ENCODE measurements at regions of chr3 and their contacts with region 1.

Region 1: GRCh38 chr3:188262913-188263683 is 109.1 kb downstream of the LPP start:
- DNase-seq: peak; percentile 49 to 54
- ATAC-seq: peak; percentile 8 to 17
- H3K4me3 ChIP-seq: no peak overlapping the region
- H3K27ac ChIP-seq: peak overlapping the region; percentile 94 to 99 (median 96)
- H3K4me1 ChIP-seq: peaks cover 83 to 92% of the 10 kb centered on the region in 2 donors
- H3K27me3 ChIP-seq: no peaks in the 10 kb centered on the region
- CTCF ChIP-seq: no peak
- POLR2A ChIP-seq: peak in 1 of 2 donors; percentile 68

Region 2: DNA sequence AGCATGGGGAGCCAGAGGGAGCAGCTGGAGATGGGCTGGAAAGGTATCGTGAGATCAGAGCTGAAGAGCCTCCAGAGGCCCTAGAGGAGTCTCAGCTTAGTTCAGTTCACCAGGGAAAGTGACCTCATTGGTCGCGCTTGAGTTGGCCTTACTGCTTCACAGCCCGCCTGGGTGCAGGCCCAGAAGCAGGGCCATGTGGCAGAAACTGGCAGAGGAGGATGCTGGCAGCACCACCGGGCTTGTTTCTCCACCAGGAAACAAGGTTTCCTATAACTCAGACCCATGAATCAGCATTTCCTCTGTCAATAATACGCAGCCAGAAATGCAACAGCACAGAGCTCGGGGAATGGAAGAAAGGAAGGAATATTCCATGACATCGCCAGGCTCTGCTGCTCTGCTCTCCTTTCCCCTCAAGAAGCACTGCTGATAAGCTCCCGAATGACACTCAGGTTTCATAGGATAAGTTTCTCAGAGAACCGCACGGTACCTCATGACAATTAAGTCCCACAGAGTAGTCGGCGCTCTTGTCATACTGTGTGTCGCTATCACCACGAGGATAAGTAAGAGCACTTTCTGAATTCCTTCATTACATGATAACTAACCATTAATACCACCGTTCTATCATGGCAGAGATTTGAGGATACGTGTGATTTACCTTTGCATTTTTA is 256.2 kb before region 1 on chr3:
- in situ Hi-C with region 1: no loop called
- intact Hi-C with region 1: loop called (anchors 5 kb)
- DNase-seq: peak; percentile 87 to 97
- ATAC-seq: peak; percentile 86 to 90
- H3K4me3 ChIP-seq: peak overlapping the region; percentile 12 to 42 (median 26)
- H3K27ac ChIP-seq: peak overlapping the region; percentile 88 to 97 (median 90)
- H3K4me1 ChIP-seq: peaks cover 9 to 18% of the 10 kb centered on the region in 2 donors
- H3K27me3 ChIP-seq: no peaks in the 10 kb centered on the region
- CTCF ChIP-seq: peak in 2 of 5 experiments; percentile 4 to 23
- POLR2A ChIP-seq: peak; percentile 36 to 72

Region 3: DNA sequence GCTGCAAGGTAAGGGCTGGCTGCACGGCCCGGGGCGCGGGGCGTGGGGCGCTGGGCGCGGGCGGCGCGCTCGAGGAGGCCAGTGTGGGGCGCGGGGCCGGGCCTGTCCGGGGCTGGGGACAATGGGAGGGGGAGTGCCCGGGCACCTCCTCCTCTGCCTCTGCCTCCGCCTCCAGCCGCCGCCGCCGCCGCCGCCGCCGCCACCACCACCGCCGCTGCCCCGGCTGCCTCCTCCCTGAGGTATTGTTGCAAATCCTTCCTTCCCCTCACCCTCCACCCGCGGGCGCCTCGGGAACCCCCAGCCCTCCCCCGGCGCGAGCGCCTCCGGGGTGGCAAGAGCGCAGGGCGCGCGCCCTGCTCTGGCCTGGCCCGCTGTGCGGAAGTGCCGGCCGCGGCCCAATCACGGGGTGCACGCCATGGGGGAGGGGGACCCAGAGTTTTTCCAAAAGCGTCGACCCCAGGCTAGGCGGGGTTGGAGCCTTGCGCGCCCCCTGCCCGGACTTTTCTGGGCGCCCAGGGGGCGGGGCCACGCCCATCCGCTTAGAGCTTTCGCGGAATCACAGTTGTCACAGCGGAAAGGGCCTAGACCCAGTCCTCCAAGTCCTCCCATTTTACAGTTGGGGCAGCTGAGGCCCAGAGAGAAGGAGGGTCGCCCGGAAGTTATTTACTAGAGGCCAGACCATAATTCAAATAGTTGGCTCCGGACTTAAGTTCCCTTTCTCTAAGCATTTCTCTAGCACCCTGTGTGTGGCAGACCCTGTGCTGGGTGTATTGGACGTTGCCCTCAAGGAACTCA is 108.9 kb before region 1 on chr3 and contains the start of gene LPP:
- in situ Hi-C with region 1: no loop called
- intact Hi-C with region 1: loop called (anchors 5 kb)
- DNase-seq: peak; percentile 53 to 76
- ATAC-seq: peak; percentile 60 to 70
- H3K4me3 ChIP-seq: peak within 1 kb of the TSS; percentile 61 to 96 (median 83)
- H3K27ac ChIP-seq: peak within 1 kb of the TSS; percentile 93 to 98 (median 98)
- H3K4me1 ChIP-seq: peaks cover 44 to 54% of the 10 kb centered on the region in 2 donors
- H3K27me3 ChIP-seq: no peaks in the 10 kb centered on the region
- CTCF ChIP-seq: no peak
- POLR2A ChIP-seq: peak; percentile 78 to 80
- total RNA-seq, gene LPP: 56.0 to 65.7 (median 58.1) TPM

Region 4: DNA sequence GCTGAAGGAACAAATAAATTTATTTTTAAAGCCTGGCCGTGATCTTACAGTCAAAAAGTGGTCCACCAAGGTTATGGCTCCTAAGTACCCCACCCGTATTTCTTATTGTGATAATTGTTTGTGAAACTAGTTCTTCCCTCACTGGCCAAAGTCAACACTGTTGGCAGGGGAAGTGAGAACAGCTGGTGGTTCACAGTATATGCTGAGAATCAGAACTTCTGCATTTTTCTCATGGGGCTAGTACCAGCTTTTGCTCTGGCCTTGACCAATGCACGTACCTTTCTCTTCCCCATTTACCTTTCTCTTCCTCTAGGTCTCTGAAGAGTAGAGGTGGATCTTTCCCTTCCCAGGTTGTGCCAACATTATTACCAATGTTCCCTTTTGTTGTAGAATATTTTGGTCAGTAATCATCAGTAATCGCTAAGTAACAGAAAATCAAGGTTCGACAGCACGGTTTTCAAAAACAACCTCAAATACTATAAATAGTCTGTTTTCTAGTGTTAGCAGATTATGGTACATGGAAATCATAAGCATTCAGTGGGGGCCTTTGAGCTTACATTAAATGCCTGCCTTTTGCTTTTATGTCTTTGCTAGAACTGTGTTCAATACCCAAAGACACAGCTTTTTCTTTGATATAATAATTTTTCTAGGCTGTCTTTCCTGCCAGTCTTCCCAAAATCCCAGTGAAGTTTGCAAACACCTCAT is 158.9 kb after region 1 on chr3:
- in situ Hi-C with region 1: loop called in 1 of 4 experiments (anchors 10 kb)
- intact Hi-C with region 1: no loop called
- DNase-seq: no peak
- ATAC-seq: no peak
- H3K4me3 ChIP-seq: no peak overlapping the region
- H3K27ac ChIP-seq: peak overlapping the region; percentile 31 to 50 (median 47)
- H3K4me1 ChIP-seq: peaks cover 21% of the 10 kb centered on the region in 2 donors
- H3K27me3 ChIP-seq: no peaks in the 10 kb centered on the region
- CTCF ChIP-seq: no peak
- POLR2A ChIP-seq: no peak

Region 5: GRCh38 chr3:188701485-188701969 is 438.4 kb after region 1 on chr3:
- in situ Hi-C with region 1: no loop called
- intact Hi-C with region 1: no loop called
- DNase-seq: no peak
- ATAC-seq: no peak
- H3K4me3 ChIP-seq: no peak overlapping the region
- H3K27ac ChIP-seq: no peak overlapping the region
- H3K4me1 ChIP-seq: peaks cover 0 to 6% of the 10 kb centered on the region in 2 donors
- H3K27me3 ChIP-seq: no peaks in the 10 kb centered on the region
- CTCF ChIP-seq: no peak
- POLR2A ChIP-seq: no peak